PC-9 (cell line): ENCODE measurements at regions of chr20 and their contacts with region 1.

Region 1: GRCh38 chr20:50146732-50147662 is 6.5 kb downstream of the PEDS1 start:
- DNase-seq: peak; percentile 75 to 76
- H3K4me3 ChIP-seq: peak overlapping the region; percentile 40; the same call in 1 of the 2 replicates
- H3K27ac ChIP-seq: peak overlapping the region; percentile 89
- H3K4me1 ChIP-seq: peaks cover 81% of the 10 kb centered on the region
- H3K27me3 ChIP-seq: no peaks in the 10 kb centered on the region
- CTCF ChIP-seq: no peak

Region 2: DNA sequence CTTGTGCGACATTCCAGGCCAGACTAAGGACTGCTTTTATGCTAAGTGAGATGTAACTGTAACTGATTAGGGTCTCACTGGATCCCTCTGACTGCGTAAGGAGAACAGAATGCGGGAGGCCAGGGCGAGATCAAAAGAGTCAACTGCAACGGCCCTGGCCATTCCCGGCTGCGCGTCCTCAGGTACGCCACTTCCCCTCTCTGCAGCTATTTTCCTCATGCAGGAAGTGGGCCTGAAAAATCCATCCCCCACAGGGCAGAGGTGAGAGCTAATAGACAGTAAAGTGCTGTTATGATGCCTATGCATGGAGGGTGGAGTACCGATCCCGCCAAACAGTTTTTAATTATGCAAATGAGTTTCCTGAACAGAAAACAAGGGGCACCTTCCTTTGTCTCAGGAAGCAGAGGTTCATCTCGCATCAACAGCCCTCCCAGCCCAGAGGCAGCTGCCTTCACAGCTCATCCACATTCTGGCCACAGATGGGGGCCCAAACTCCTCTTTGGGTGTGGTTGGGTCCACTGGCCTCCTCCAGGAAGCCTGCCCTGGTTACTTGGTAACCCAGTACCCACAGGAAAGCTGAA is 1328.5 kb before region 1 on chr20:
- CTCF ChIA-PET with region 1: no interaction called
- POLR2A ChIA-PET with region 1: no interaction called
- intact Hi-C with region 1: no loop called
- DNase-seq: no peak
- H3K4me3 ChIP-seq: no peak overlapping the region
- H3K27ac ChIP-seq: no peak overlapping the region
- H3K4me1 ChIP-seq: peaks cover 18% of the 10 kb centered on the region
- H3K27me3 ChIP-seq: no peaks in the 10 kb centered on the region
- CTCF ChIP-seq: no peak

Region 3: GRCh38 chr20:49852522-49853080 is 294.4 kb before region 1 on chr20:
- CTCF ChIA-PET with region 1: interaction called, 15 read pairs
- POLR2A ChIA-PET with region 1: no interaction called
- intact Hi-C with region 1: no loop called
- DNase-seq: no peak
- H3K4me3 ChIP-seq: no peak overlapping the region
- H3K27ac ChIP-seq: peak overlapping the region; percentile 10; the same call in 1 of the 2 replicates
- H3K4me1 ChIP-seq: 0 out of 2 replicates have a peak, but pooled peaks cover 7% of the 10 kb centered on the region
- H3K27me3 ChIP-seq: no peaks in the 10 kb centered on the region
- CTCF ChIP-seq: no peak

Region 4: DNA sequence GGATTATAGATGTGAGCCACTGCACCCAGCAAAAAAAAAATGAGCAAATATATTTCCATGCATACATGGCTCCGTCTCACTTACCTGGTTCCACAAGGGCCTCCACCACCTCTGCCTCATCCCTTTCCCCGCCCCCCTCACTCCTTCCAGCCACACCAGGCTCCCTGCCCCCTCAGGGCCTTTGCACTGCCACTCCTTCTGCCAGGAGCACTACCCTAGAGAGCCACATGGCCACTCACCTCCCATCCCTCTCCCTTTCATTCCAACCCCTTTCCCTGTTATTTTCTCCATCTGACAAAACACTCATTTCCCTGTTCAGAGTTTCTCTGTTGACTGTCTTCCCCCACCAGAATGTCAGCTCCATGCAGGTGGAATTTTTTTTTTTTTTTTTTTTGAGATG is 151.4 kb before region 1 on chr20:
- CTCF ChIA-PET with region 1: no interaction called
- POLR2A ChIA-PET with region 1: interaction called, 15 read pairs
- intact Hi-C with region 1: no loop called
- DNase-seq: no peak
- H3K4me3 ChIP-seq: no peak overlapping the region
- H3K27ac ChIP-seq: no peak overlapping the region
- H3K4me1 ChIP-seq: peaks cover 10% of the 10 kb centered on the region; the same call in 1 of the 2 replicates
- H3K27me3 ChIP-seq: no peaks in the 10 kb centered on the region
- CTCF ChIP-seq: no peak

Region 5: DNA sequence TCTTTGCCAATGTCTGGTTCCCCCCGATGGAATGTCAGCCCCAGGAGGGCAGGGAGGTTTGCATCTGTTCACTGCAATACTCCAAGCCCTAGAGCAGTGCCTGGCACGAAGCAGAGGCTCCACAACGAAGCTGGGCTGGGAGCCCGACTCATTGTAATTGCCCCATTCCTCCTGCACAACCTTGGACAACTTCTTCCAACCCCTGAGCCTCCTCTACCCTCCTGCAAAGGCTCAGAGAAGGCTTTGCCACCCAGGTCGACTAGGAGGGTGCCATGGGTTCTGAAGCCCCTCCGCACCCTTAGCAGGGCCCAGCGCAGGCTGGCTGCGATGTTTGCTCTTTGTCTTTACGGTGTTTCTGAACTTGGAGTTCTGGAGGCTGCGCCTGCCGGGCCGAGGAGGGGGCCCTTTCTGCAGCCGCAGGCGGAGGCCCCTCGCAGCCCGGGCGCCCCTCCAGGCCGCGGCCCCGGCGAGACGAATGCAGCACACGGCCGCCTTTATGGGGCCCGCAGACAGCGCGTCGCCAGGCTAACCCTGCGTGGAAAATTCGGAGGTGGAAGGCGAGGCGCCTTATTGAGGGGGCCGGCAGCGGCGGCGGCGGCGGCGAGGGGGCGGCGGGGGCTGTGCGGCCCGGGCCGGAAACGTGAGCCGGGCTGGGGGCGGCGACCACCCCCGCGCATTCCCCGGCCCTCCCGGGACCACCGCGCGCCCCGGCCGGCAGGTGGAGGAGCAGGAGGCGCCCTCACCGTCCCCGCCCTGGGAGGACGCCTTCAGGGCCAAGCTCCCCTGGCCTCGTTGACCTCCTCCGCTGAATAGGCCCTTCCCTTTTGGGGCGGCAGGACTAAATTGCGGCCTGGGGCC is 137.2 kb before region 1 on chr20:
- CTCF ChIA-PET with region 1: no interaction called
- POLR2A ChIA-PET with region 1: no interaction called
- intact Hi-C with region 1: no loop called
- DNase-seq: no peak
- H3K4me3 ChIP-seq: no peak overlapping the region
- H3K27ac ChIP-seq: no peak overlapping the region
- H3K4me1 ChIP-seq: no peaks in the 10 kb centered on the region
- H3K27me3 ChIP-seq: no peaks in the 10 kb centered on the region
- CTCF ChIP-seq: no peak

Region 6: DNA sequence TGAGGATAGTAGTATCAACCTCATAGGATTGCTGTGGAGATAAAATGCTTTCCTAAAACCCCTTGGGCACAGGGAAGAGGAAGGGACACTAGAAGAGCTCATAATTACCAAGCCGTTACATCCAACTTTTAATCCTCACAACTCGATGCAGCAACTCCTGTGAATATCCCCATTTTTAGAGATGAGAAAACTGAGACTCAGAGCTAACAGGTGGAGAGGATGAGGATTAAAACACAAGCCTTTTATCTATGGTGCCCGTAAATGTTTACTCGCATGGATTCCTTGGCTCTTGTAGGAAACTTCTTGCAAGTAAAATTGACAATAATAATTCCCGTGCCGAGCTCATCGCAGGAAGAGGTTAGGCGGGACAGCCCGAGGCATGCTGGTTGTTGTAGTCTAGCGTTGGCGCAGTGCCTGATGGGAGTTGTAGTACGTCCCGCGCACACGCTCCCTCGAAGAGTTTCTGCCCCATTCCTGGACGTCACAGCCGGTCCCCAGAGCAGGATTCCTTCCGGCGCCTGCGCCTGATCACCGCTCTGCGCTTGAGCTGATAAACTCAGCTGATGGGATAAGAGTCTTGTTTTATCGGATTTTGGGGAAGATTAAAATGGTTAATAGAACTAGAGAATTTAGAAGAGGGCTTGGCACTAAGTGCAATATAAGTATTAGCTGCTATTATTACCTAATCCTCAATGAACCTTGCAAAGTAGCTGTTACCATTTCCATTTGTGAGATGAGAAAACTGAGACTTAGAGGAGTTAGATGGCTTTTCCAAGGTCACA is 31.2 kb before region 1 on chr20:
- CTCF ChIA-PET with region 1: interaction called, 32 read pairs
- POLR2A ChIA-PET with region 1: interaction called, 10 read pairs
- intact Hi-C with region 1: loop called (anchors 2 kb)
- DNase-seq: peak; percentile 90 to 95
- H3K4me3 ChIP-seq: peak overlapping the region; percentile 73
- H3K27ac ChIP-seq: peak overlapping the region; percentile 20; the same call in 1 of the 2 replicates
- H3K4me1 ChIP-seq: peaks cover 27% of the 10 kb centered on the region
- H3K27me3 ChIP-seq: no peaks in the 10 kb centered on the region
- CTCF ChIP-seq: no peak

Region 7: DNA sequence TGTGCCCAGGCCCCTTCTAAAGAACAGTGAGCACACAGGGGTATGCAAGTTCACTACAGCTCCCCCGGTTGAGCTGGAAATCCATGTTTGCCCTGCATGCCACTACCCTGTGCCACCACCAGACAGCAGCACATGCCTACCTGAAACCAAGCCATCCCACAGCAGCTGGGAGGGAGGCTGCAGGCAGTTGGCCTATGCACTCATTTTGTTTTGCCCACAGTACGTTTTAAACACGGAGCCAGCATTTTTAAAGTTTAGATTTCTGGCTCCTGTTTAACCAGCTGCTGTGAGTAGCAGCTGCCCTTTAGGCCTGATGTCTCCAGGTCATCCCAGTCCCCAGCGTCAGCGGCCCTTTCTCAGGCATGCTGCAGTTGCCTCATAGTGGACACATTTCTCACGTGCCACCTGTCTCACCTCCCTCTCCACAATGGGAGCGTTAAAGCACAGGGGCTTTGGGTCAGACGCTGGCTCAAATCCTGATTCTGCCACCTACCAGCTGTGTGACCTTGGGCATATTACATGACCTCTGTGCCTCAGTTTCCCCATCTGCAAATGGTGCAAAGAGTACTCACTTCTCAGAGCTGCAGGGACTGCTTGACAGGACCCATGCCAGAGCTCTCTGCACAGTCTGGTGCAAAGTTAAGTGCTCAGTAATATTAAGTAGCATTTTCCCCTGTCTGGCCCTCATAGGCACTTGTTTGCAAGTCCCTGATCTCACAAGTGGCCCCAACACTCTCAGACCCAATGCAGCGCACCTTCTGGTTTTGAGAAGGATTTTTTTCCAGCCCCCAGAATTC is 25.9 kb before region 1 on chr20:
- CTCF ChIA-PET with region 1: interaction called, 32 read pairs
- POLR2A ChIA-PET with region 1: no interaction called
- intact Hi-C with region 1: loop called (anchors 1 kb)
- DNase-seq: peak; percentile 66 to 72
- H3K4me3 ChIP-seq: no peak overlapping the region
- H3K27ac ChIP-seq: no peak overlapping the region
- H3K4me1 ChIP-seq: peaks cover 11% of the 10 kb centered on the region
- H3K27me3 ChIP-seq: no peaks in the 10 kb centered on the region
- CTCF ChIP-seq: peak; percentile 90

Region 8: DNA sequence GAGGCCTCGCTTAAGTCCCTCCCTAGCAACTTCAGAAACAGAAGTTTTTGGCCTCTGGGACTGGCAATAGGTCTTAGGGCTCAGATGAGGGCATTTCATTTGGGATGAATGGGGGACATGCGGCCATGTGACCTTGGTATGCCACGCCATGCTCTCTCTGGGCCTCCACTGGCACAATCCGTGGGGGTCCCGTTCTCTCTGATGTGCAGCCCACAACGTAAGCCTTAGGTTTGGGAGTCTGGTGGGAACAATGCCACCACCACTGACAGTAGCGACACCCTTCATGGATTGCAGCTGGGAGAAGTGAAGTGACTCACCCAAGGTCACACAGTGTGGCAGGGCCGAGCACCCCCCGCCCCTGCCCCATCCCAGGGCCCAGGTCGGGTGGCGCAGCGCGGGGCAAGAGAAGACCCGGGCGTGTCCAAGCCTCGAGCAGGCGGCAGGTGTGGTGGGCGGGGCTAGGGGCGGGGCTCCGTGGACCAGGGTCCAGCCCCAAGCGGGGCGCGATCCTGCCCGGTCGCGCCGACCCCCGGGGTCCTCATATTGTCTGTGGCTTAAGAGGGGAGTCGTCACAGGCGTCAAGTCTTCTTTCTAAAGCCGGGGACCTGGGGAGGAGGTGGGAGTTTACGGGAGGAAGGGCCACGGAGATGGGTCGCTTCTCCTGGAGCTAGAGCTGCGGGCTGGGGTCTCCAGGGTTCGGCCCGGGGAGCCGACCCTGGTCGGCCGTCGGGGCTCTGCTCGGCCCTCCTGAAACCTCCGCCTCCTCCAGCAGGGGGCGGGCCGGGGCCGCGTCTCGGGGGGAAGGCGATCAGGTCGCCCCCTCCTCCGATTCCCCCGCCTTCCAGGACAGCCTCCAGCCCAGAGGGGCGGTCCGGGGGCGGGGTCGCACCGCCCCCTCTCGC is 42.9 kb after region 1 on chr20:
- CTCF ChIA-PET with region 1: no interaction called
- POLR2A ChIA-PET with region 1: no interaction called
- intact Hi-C with region 1: no loop called
- DNase-seq: peak; percentile 70 to 95
- H3K4me3 ChIP-seq: peak overlapping the region; percentile 88; the same call in 1 of the 2 replicates
- H3K27ac ChIP-seq: peak overlapping the region; percentile 99
- H3K4me1 ChIP-seq: peaks cover 44% of the 10 kb centered on the region
- H3K27me3 ChIP-seq: no peaks in the 10 kb centered on the region
- CTCF ChIP-seq: peak; percentile 86